Posterior cingulate gyrus (tissue), 11 donors: ENCODE measurements at regions of chr7 and their contacts with region 1.

Region 1: DNA sequence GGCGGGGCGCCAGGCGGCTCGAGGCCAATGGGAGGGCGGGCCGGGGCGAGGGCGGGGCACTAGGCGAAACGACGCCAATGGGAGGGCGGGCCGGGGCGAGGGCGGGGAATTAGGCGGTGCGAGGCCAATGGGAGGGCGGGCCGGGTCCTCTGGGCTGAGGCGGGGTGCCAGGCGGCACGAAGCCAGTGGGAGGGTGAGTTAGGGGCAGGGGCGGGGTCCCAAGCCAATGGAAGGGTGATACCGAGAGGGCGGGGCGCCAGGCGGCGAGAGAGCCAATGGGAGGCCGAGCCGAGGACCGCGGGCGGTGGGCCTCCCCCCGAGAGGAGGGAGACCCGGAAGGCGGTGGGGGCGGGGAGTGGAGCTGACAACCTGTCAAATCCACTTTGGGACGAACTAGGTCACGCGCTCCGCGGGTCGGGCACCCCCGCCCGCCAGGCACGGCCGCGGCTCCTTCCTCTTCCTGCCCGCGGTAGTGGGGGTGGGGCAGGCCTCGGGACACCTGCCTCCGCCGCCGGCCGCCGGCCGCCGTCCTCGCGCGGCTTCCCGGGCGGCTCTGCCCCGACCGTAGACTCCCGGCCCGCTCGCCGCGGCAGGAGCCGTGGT is 28.0 kb upstream of the KMT2C start:
- DNase-seq: peak; percentile 100

Region 2: GRCh38 chr7:152336754-152337368 is 126.9 kb before region 1 on chr7:
- intact Hi-C with region 1: loop called (anchors 5 kb)
- DNase-seq: no peak

Region 3: GRCh38 chr7:152436111-152436930 is 27.5 kb before region 1 on chr7:
- intact Hi-C with region 1: loop called (anchors 1 kb)
- DNase-seq: peak; percentile 90 to 98 (median 92)

Region 4: GRCh38 chr7:152675759-152676636 is 212.2 kb after region 1 on chr7 and contains the start of gene XRCC2:
- intact Hi-C with region 1: loop called (anchors 5 kb)
- DNase-seq: peak; percentile 78 to 98 (median 86)

Region 5: GRCh38 chr7:152759949-152760853 is 296.4 kb after region 1 on chr7:
- intact Hi-C with region 1: loop called (anchors 5 kb)
- DNase-seq: peak; percentile 18 to 88 (median 42)